HCT116 (cell line): ENCODE measurements at regions of chr16 and their contacts with region 1.

Region 1: GRCh38 chr16:88452482-88453216 is 431 bp upstream of the ZFPM1 start:
- DNase-seq: peak; percentile 92
- ATAC-seq: peak; percentile 75
- H3K4me3 ChIP-seq: peak overlapping the region; percentile 46 to 60
- H3K27ac ChIP-seq: peak overlapping the region; percentile 62
- H3K4me1 ChIP-seq: peaks cover 34 to 56% of the 10 kb centered on the region in 2 experiments
- H3K27me3 ChIP-seq: no peaks in the 10 kb centered on the region
- CTCF ChIP-seq: no peak
- POLR2A ChIP-seq: no peak
- RAD21 ChIP-seq: no peak

Region 2: GRCh38 chr16:87881324-87882200 is 571.1 kb before region 1 on chr16:
- CTCF ChIA-PET with region 1: no interaction called
- POLR2A ChIA-PET with region 1: no interaction called
- RAD21 ChIA-PET with region 1: no interaction called
- intact Hi-C with region 1: no loop called
- DNase-seq: no peak
- ATAC-seq: no peak
- H3K4me3 ChIP-seq: no peak overlapping the region
- H3K27ac ChIP-seq: no peak overlapping the region
- H3K4me1 ChIP-seq: peaks cover 6 to 7% of the 10 kb centered on the region in 2 experiments; a peak in 2 of 4 replicates
- H3K27me3 ChIP-seq: no peaks in the 10 kb centered on the region
- CTCF ChIP-seq: no peak
- POLR2A ChIP-seq: no peak
- RAD21 ChIP-seq: no peak

Region 3: GRCh38 chr16:88505405-88506082 is 52.9 kb after region 1 on chr16:
- CTCF ChIA-PET with region 1: interaction called, 3 read pairs
- POLR2A ChIA-PET with region 1: no interaction called
- RAD21 ChIA-PET with region 1: no interaction called
- intact Hi-C with region 1: loop called (anchors 2 kb)
- DNase-seq: peak; percentile 60
- ATAC-seq: peak; percentile 84
- H3K4me3 ChIP-seq: no peak overlapping the region
- H3K27ac ChIP-seq: peak overlapping the region; percentile 21; the same call in 1 of the 2 replicates
- H3K4me1 ChIP-seq: peaks cover 6 to 17% of the 10 kb centered on the region in 2 experiments; a peak in 3 of 4 replicates
- H3K27me3 ChIP-seq: no peaks in the 10 kb centered on the region
- CTCF ChIP-seq: peak; percentile 69 to 88 (median 87); a peak in 5 of 6 replicates
- POLR2A ChIP-seq: no peak
- RAD21 ChIP-seq: no peak; the same call in 1 of the 2 replicates

Region 4: GRCh38 chr16:88527186-88527936 is 74.7 kb after region 1 on chr16:
- CTCF ChIA-PET with region 1: no interaction called
- POLR2A ChIA-PET with region 1: no interaction called
- RAD21 ChIA-PET with region 1: interaction called in 1 of 2 experiments, 14 read pairs
- intact Hi-C with region 1: loop called (anchors 5 kb)
- DNase-seq: peak; percentile 34
- ATAC-seq: peak; percentile 87
- H3K4me3 ChIP-seq: no peak overlapping the region
- H3K27ac ChIP-seq: peak overlapping the region; percentile 34; the same call in 1 of the 2 replicates
- H3K4me1 ChIP-seq: peaks cover 0 to 10% of the 10 kb centered on the region in 2 experiments; a peak in 3 of 4 replicates
- H3K27me3 ChIP-seq: no peaks in the 10 kb centered on the region
- CTCF ChIP-seq: peak in 2 of 3 experiments; percentile 92 to 97; a peak in 4 of 6 replicates
- POLR2A ChIP-seq: no peak
- RAD21 ChIP-seq: no peak

Region 5: DNA sequence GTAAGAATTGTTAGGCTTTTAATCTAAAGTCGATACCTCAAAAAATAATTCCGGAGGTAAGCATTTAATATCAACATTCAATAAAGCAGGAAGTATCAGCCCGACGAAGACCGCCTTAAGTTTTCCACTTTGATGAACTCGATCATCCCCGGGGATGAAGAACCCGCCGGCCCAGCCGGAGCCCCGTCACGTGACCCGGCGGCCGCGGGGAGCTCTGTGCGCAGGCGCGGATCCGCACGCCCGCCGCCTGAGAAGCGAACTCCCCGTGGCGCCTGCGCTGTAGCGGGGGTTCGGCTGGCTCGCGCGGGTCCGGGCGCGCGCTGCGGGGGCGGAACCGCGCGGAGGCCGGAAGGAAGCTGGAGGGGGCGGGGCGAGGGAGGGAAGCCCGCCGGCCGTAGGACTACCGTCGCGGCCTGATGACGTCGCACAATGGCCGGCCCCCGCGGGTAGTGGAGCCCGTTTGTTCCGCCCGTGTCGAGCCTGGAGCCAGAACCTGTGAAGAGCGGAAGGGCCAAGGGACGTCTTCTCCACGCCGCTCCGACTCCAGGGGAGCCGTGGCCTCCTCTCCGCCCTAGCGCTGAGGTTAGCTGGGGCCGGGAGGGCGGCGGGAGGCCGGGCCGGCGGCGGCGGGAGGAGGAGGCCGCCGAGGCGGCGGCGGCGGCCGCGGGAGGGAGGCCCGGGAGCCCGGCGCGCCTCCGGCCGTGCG is 117.5 kb after region 1 on chr16 and contains the start of gene ZC3H18:
- CTCF ChIA-PET with region 1: no interaction called
- POLR2A ChIA-PET with region 1: interaction called, 3 read pairs
- RAD21 ChIA-PET with region 1: no interaction called
- intact Hi-C with region 1: loop called (anchors 5 kb)
- DNase-seq: peak; percentile 91
- ATAC-seq: peak; percentile 93
- H3K4me3 ChIP-seq: peak within 1 kb of the TSS; percentile 74 to 92
- H3K27ac ChIP-seq: peak within 1 kb of the TSS; percentile 73
- H3K4me1 ChIP-seq: peaks cover 13 to 33% of the 10 kb centered on the region in 2 experiments
- H3K27me3 ChIP-seq: no peaks in the 10 kb centered on the region
- CTCF ChIP-seq: no peak
- POLR2A ChIP-seq: peak; percentile 83
- RAD21 ChIP-seq: no peak
- total RNA-seq, gene ZC3H18: 57.8 TPM

Region 6: GRCh38 chr16:88650749-88651275 is 198.2 kb after region 1 on chr16 and contains the start of gene CYBA:
- CTCF ChIA-PET with region 1: no interaction called
- POLR2A ChIA-PET with region 1: no interaction called
- RAD21 ChIA-PET with region 1: no interaction called
- intact Hi-C with region 1: loop called (anchors 5 kb)
- DNase-seq: peak; percentile 57
- ATAC-seq: peak; percentile 94
- H3K4me3 ChIP-seq: peak within 1 kb of the TSS; percentile 92 to 99
- H3K27ac ChIP-seq: peak within 1 kb of the TSS; percentile 86
- H3K4me1 ChIP-seq: peaks cover 16 to 26% of the 10 kb centered on the region in 2 experiments
- H3K27me3 ChIP-seq: no peaks in the 10 kb centered on the region
- CTCF ChIP-seq: no peak
- POLR2A ChIP-seq: peak; percentile 77
- RAD21 ChIP-seq: no peak
- total RNA-seq, gene CYBA: 321 TPM

Region 7: GRCh38 chr16:88697831-88698615 is 245.4 kb after region 1 on chr16:
- CTCF ChIA-PET with region 1: no interaction called
- POLR2A ChIA-PET with region 1: no interaction called
- RAD21 ChIA-PET with region 1: no interaction called
- intact Hi-C with region 1: no loop called
- DNase-seq: no peak
- ATAC-seq: peak; percentile 63
- H3K4me3 ChIP-seq: no peak overlapping the region
- H3K27ac ChIP-seq: no peak overlapping the region
- H3K4me1 ChIP-seq: no peaks in the 10 kb centered on the region
- H3K27me3 ChIP-seq: no peaks in the 10 kb centered on the region
- CTCF ChIP-seq: peak in 2 of 3 experiments; percentile 56 to 66; a peak in 4 of 6 replicates
- POLR2A ChIP-seq: no peak
- RAD21 ChIP-seq: no peak